ENCODE measurements at regions of chr16 and their contacts with region 1.

Region 1: GRCh38 chr16:22681554-22682291 is 132.2 kb upstream of the HS3ST2 start:
- DNase-seq: no peak
- H3K4me3 ChIP-seq: no peak overlapping the region
- H3K4me3 Mint-ChIP-seq: no peak overlapping the region
- H3K27ac ChIP-seq: no peak overlapping the region
- H3K27ac Mint-ChIP-seq: peak overlapping the region in 1 of 7 donors; percentile 21
- H3K4me1 ChIP-seq: no peaks in the 10 kb centered on the region
- H3K4me1 Mint-ChIP-seq: peaks cover 4% of the 10 kb centered on the region
- H3K27me3 ChIP-seq: peaks cover 5 to 24% of the 10 kb centered on the region in 2 donors
- H3K27me3 Mint-ChIP-seq: peaks cover 9 to 18% (median 11%) of the 10 kb centered on the region in 3 donors
- CTCF ChIP-seq: no peak

Region 2: DNA sequence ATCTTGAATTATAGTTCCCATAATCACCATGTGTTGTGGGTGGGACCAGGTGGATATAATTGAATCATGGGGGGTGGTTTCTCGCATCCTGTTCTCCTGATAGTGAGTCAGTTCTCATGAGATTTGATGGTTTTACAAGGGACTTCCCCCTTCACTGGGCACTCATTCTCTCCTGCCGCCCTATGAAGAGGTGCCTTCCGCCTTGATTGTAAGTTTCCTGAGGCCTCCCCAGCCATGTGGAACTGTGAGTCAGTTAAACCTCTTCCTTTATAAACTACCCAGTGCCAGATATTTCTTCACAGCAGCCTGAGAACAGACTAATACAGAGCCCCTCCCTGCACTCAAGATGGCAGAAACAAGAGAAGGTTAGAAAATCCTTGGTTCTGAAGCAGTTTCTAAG is 1496.9 kb before region 1 on chr16:
- intact Hi-C with region 1: loop called in 1 of 2 experiments (anchors 5 kb)
- DNase-seq: peak in 1 of 3 donors; percentile 46
- H3K4me3 ChIP-seq: no peak overlapping the region
- H3K4me3 Mint-ChIP-seq: no peak overlapping the region
- H3K27ac ChIP-seq: no peak overlapping the region
- H3K27ac Mint-ChIP-seq: peak overlapping the region in 2 of 7 donors; percentile 70 to 84
- H3K4me1 ChIP-seq: peaks cover 4 to 5% of the 10 kb centered on the region in 2 donors
- H3K4me1 Mint-ChIP-seq: peaks cover 6% of the 10 kb centered on the region
- H3K27me3 ChIP-seq: peaks cover 0 to 2% of the 10 kb centered on the region in 2 donors
- H3K27me3 Mint-ChIP-seq: peaks cover 2 to 8% (median 5%) of the 10 kb centered on the region in 3 donors
- CTCF ChIP-seq: no peak

Region 3: GRCh38 chr16:22668318-22668717 is 13.4 kb before region 1 on chr16:
- intact Hi-C with region 1: loop called in 1 of 2 experiments (anchors 2 kb)
- DNase-seq: no peak
- H3K4me3 ChIP-seq: no peak overlapping the region
- H3K4me3 Mint-ChIP-seq: no peak overlapping the region
- H3K27ac ChIP-seq: no peak overlapping the region
- H3K27ac Mint-ChIP-seq: no peak overlapping the region
- H3K4me1 ChIP-seq: no peaks in the 10 kb centered on the region
- H3K4me1 Mint-ChIP-seq: no peaks in the 10 kb centered on the region
- H3K27me3 ChIP-seq: peaks cover 0 to 2% of the 10 kb centered on the region in 2 donors
- H3K27me3 Mint-ChIP-seq: no peaks in the 10 kb centered on the region
- CTCF ChIP-seq: no peak

Region 4: DNA sequence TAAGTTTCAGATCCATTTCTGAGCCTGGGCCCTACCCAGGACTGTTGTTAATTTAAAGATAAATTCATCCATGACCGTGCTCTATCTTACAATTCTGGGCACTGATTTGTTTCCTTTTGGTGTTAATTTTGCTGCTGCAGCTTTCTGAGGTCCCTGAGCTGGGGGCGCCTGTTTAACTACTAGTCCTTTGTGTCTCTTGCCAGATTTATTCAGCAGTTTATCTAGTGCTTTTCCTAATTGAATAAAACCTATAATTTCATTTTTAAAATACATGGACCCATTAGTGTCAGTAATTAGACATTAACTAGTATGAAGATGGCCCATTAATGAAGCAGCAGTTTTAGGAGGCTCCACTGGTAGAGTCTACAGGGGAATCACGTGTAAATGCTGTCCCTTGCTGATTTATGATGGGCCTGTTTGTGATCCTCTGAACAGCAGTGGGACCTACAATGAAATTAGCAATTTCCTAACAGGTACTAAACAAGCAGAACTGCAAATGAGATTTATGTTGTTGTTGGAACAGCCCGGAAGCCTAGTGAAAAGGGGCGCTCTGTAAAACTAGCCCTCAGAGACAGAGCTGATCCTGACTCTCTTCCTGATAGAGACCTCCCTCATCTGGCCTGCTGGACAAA is 187.0 kb after region 1 on chr16:
- intact Hi-C with region 1: no loop called
- DNase-seq: no peak
- H3K4me3 ChIP-seq: no peak overlapping the region
- H3K4me3 Mint-ChIP-seq: no peak overlapping the region
- H3K27ac ChIP-seq: no peak overlapping the region
- H3K27ac Mint-ChIP-seq: no peak overlapping the region
- H3K4me1 ChIP-seq: no peaks in the 10 kb centered on the region
- H3K4me1 Mint-ChIP-seq: no peaks in the 10 kb centered on the region
- H3K27me3 ChIP-seq: no peaks in the 10 kb centered on the region
- H3K27me3 Mint-ChIP-seq: peaks cover 0 to 13% (median 5%) of the 10 kb centered on the region in 3 donors
- CTCF ChIP-seq: no peak

Measured in CD14-positive monocyte (primary cell).